ENCODE measurements at regions of chr1 and their contacts with region 1.

Region 1: DNA sequence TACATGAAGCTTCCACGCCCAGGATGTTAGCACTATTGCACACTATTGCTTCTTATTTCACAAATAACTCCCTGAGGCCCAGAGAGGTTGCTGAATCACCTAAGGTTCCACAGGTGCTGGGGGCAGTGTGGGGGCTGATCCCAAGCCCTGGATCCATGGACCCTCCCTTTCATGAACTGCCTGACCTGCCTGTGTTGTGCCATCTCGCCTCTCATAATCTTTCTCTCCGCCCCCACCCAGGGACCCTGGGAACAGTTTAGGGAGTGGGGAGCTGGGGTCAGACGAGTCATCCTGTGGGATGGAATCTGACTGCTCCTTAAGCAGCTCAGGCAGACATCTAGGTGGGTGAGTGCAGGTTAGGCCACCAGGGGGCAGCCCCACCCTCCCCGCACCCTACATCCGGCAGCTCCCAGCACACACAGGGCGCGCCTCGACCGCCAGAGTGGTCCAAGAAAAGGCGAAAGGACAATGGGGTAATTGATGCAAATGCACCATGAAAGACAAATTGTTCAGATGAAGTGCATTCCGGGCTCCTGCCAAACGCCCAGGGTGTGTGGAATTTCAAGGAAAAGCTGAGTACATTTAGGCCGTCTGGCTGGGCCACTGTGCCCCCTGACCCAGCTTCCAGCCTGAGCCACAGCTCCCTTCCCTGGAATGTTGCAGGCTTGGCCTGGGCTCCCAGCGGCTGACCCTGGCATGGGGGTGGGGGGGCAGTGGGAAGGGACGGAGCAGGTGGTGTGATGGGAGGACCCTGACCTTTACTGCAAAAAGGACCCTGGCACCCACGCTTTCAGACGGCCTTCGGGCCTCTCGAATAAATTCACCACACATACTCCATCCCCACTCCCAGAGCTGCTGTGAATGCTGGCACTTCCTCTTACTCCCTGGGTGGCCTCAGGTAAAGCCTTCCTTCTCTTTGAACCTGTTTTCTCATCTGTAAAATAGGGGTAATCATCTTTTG is 20.8 kb downstream of the PHLDA3 start:
- DNase-seq: peak; percentile 80
- H3K4me3 ChIP-seq: no peak overlapping the region; a peak in 1 of 4 replicates
- H3K27ac ChIP-seq: no peak overlapping the region
- H3K4me1 ChIP-seq: peaks cover 9 to 27% of the 10 kb centered on the region in 2 experiments; a peak in 3 of 4 replicates
- H3K27me3 ChIP-seq: no peaks in the 10 kb centered on the region
- CTCF ChIP-seq: peak; percentile 76
- EP300 ChIP-seq: no peak
- RAD21 ChIP-seq: peak; percentile 61

Region 2: DNA sequence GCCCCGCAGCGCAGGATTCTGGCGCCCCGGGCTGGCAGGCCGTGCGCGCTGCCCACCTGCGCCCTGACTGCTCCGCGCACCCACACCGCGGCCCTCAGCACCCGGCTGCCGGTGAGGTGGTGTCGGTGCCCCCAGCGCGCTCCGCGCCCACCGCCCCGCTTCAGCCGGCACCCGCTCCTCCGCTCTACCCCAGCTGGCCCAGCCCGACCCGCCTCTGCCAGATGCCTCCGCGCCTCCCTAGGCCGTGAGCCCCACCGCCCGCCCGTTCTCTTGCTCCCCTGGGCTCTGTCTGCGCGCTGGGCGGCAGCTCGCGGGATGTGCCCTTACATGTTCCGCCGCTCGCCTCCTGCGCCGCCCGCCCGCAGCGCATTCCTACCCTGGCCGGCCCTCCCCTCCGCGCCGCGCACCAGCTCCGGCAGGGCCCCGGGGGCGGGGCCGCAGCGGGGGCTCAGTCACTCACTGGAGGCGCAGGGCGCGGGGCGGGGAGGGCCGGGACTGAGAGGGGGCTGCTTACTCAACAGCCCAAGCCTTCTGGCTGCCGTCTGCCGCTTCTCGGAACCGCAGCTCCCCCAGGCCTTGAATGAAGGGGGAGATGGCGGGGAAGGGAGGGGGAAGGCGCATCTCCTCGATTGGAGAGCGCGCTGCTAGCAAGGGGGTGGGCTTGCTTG is 20.8 kb after region 1 on chr1 and contains the start of gene PHLDA3:
- CTCF ChIA-PET with region 1: interaction called, 31 read pairs
- POLR2A ChIA-PET with region 1: interaction called, 4 read pairs
- DNase-seq: peak; percentile 93
- H3K4me3 ChIP-seq: peak within 1 kb of the TSS; percentile 77 to 82
- H3K27ac ChIP-seq: peak within 1 kb of the TSS; percentile 83 to 94
- H3K4me1 ChIP-seq: peaks cover 13 to 29% of the 10 kb centered on the region in 2 experiments; a peak in 3 of 4 replicates
- H3K27me3 ChIP-seq: no peaks in the 10 kb centered on the region
- CTCF ChIP-seq: no peak
- EP300 ChIP-seq: no peak
- RAD21 ChIP-seq: no peak
- polyA plus RNA-seq, gene PHLDA3: 105 and 108 TPM in 2 replicates

Region 3: GRCh38 chr1:201481761-201482493 is 33.7 kb after region 1 on chr1:
- CTCF ChIA-PET with region 1: interaction called, 17 read pairs
- POLR2A ChIA-PET with region 1: no interaction called
- DNase-seq: peak; percentile 95
- H3K4me3 ChIP-seq: peak overlapping the region in 1 of 2 experiments; percentile 9; a peak in 1 of 4 replicates
- H3K27ac ChIP-seq: 0 out of 4 replicates have a peak overlapping the region, but pooled peaks of 1 of the 2 experiments have one; percentile 13
- H3K4me1 ChIP-seq: peaks cover 0 to 6% of the 10 kb centered on the region in 2 experiments; a peak in 2 of 4 replicates
- H3K27me3 ChIP-seq: no peaks in the 10 kb centered on the region
- CTCF ChIP-seq: peak; percentile 86
- EP300 ChIP-seq: no peak
- RAD21 ChIP-seq: peak; percentile 93

Region 4: GRCh38 chr1:201495471-201496295 is 47.5 kb after region 1 on chr1:
- CTCF ChIA-PET with region 1: interaction called, 13 read pairs
- POLR2A ChIA-PET with region 1: no interaction called
- DNase-seq: peak; percentile 42
- H3K4me3 ChIP-seq: no peak overlapping the region
- H3K27ac ChIP-seq: no peak overlapping the region; a peak in 1 of 4 replicates
- H3K4me1 ChIP-seq: peaks cover 12 to 20% of the 10 kb centered on the region in 2 experiments; a peak in 3 of 4 replicates
- H3K27me3 ChIP-seq: no peaks in the 10 kb centered on the region
- CTCF ChIP-seq: no peak
- EP300 ChIP-seq: no peak
- RAD21 ChIP-seq: no peak